OCI-LY7 (cell line): ENCODE measurements at regions of chr2 and their contacts with region 1.

Region 1: GRCh38 chr2:199488772-199489400 is 31.1 kb upstream of the SATB2 start:
- DNase-seq: peak; percentile 75
- H3K4me3 ChIP-seq: no peak overlapping the region
- H3K27ac ChIP-seq: no peak overlapping the region
- H3K4me1 ChIP-seq: peaks cover 23% of the 10 kb centered on the region
- CTCF ChIP-seq: peak; percentile 95

Region 2: GRCh38 chr2:198309673-198310280 is 1179.1 kb before region 1 on chr2:
- CTCF ChIA-PET with region 1: no interaction called
- POLR2A ChIA-PET with region 1: interaction called, 4 read pairs
- intact Hi-C with region 1: loop called (anchors 2 kb)
- DNase-seq: peak; percentile 72
- H3K4me3 ChIP-seq: no peak overlapping the region
- H3K27ac ChIP-seq: no peak overlapping the region
- H3K4me1 ChIP-seq: peaks cover 13% of the 10 kb centered on the region
- CTCF ChIP-seq: peak; percentile 96

Region 3: GRCh38 chr2:198374375-198375082 is 1114.4 kb before region 1 on chr2:
- CTCF ChIA-PET with region 1: no interaction called
- POLR2A ChIA-PET with region 1: no interaction called
- intact Hi-C with region 1: loop called (anchors 2 kb)
- DNase-seq: peak; percentile 82
- H3K4me3 ChIP-seq: no peak overlapping the region
- H3K27ac ChIP-seq: peak overlapping the region; percentile 41
- H3K4me1 ChIP-seq: peaks cover 30% of the 10 kb centered on the region
- CTCF ChIP-seq: peak; percentile 100

Region 4: GRCh38 chr2:198657512-198658121 is 831.3 kb before region 1 on chr2:
- CTCF ChIA-PET with region 1: no interaction called
- POLR2A ChIA-PET with region 1: no interaction called
- intact Hi-C with region 1: loop called (anchors 2 kb)
- DNase-seq: peak; percentile 82
- H3K4me3 ChIP-seq: no peak overlapping the region
- H3K27ac ChIP-seq: no peak overlapping the region
- H3K4me1 ChIP-seq: peaks cover 19% of the 10 kb centered on the region
- CTCF ChIP-seq: peak; percentile 97

Region 5: GRCh38 chr2:199019898-199020507 is 468.9 kb before region 1 on chr2:
- CTCF ChIA-PET with region 1: no interaction called
- POLR2A ChIA-PET with region 1: no interaction called
- intact Hi-C with region 1: loop called (anchors 1 kb)
- DNase-seq: peak; percentile 85
- H3K4me3 ChIP-seq: no peak overlapping the region
- H3K27ac ChIP-seq: no peak overlapping the region
- H3K4me1 ChIP-seq: peaks cover 29% of the 10 kb centered on the region
- CTCF ChIP-seq: peak; percentile 91

Region 6: DNA sequence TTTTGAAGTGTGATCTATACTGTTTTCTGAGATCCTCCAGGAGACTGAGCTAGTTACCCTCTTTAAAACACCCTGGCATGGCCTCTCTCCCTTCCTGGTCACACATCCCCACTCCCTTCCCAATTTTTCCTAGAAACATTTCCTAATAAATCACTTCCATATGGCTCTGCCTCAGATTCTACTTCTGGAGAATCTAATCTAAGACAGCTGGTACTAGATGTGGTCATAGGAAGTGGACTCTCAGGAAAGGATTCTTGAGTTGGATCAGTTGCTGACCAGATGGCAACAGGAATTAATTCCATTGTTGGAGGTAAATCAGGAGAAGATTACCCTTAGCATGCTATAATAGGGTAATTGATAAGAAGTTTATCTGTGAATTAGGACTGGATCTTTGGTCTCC is 341.7 kb before region 1 on chr2:
- CTCF ChIA-PET with region 1: no interaction called
- POLR2A ChIA-PET with region 1: no interaction called
- intact Hi-C with region 1: no loop called
- DNase-seq: no peak
- H3K4me3 ChIP-seq: no peak overlapping the region
- H3K27ac ChIP-seq: no peak overlapping the region
- H3K4me1 ChIP-seq: no peaks in the 10 kb centered on the region
- CTCF ChIP-seq: no peak

Region 7: DNA sequence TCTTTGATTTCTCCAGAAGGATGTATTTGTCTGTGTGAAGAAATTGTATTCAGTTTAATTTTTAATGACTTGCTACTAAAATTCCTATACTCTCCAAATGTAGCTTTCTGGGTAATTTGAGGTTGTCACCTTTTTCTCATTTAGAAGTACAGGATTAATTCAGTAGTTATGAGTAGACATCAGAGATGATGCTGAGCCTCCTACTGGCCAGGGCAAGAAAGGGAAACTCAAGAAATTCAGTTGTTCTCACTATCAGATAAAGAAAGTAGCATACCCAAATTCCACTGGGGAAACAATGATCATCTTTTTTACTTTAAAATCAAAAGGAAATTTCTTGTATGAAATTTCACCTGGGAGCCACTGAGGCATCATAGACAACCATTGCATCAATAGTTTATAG is 230.6 kb before region 1 on chr2:
- CTCF ChIA-PET with region 1: no interaction called
- POLR2A ChIA-PET with region 1: no interaction called
- intact Hi-C with region 1: loop called (anchors 5 kb)
- DNase-seq: peak; percentile 35
- H3K4me3 ChIP-seq: no peak overlapping the region
- H3K27ac ChIP-seq: no peak overlapping the region
- H3K4me1 ChIP-seq: no peaks in the 10 kb centered on the region
- CTCF ChIP-seq: peak; percentile 74

Region 8: GRCh38 chr2:199739413-199740110 is 250.7 kb after region 1 on chr2:
- CTCF ChIA-PET with region 1: no interaction called
- POLR2A ChIA-PET with region 1: no interaction called
- intact Hi-C with region 1: loop called (anchors 10 kb)
- DNase-seq: peak; percentile 62
- H3K4me3 ChIP-seq: no peak overlapping the region
- H3K27ac ChIP-seq: no peak overlapping the region
- H3K4me1 ChIP-seq: no peaks in the 10 kb centered on the region
- CTCF ChIP-seq: peak; percentile 99